ENCODE measurements at regions of chr10 and their contacts with region 1.

Region 1: DNA sequence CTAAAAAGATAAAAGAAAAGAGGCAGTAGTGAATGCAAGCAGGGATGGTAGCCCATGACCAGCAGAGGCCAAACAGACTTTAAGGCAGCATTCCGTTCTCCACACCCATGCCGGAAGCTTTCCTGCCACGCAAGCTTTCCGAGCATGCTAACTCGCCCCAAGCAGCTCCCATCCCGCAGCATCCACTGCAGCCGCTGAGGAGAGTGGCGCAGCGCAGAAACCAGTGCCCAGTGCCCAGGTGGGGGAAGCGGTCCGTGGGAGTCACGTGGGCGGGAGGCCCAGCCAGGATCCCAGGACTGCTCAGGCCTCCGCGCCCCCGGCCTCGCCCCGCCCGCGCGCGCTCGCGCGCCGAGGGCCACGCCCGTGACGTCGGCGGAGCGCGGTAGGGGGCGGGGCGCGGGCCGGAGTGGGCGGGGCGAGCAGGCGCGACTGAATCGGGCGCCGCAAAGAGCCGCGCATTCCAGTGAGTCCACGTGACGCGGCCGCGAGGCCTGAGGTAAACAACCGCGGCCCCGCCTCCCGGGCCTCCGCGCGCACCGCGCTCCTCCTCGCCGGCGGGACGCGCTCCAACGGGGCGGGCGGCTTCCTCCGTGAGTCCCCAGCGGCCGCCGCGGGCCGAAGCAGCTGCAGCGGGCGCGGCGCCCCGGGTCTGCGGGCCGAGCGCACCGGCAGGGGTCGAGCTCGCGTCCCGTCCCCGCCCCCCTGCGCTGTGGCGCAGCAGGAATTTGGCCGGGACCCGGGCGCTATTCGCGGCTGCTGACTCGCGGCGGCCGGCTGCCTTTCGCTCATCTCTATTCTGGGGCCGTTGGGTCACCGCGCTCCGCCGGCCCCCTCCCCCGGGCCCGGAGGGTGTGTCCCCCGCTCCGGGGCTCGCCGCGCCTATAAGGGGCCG is at the start of gene OTUD1:
- DNase-seq: peak; percentile 89 to 99 (median 95)
- ATAC-seq: peak; percentile 96
- H3K4me3 ChIP-seq: peak within 1 kb of the TSS; percentile 96
- H3K4me3 Mint-ChIP-seq: peak within 1 kb of the TSS; percentile 81 to 99 (median 90)
- H3K27ac ChIP-seq: peak within 1 kb of the TSS; percentile 92
- H3K27ac Mint-ChIP-seq: peak within 1 kb of the TSS; percentile 89 to 96 (median 94)
- H3K4me1 ChIP-seq: peaks cover 27 to 29% of the 10 kb centered on the region in 2 donors
- H3K4me1 Mint-ChIP-seq: peaks cover 28 to 44% (median 39%) of the 10 kb centered on the region in 7 donors
- H3K27me3 ChIP-seq: no peaks in the 10 kb centered on the region
- H3K27me3 Mint-ChIP-seq: peaks cover 0 to 8% (median 0%) of the 10 kb centered on the region in 5 donors
- total RNA-seq, gene OTUD1: 20.7 to 118 (median 44.5) TPM

Region 2: GRCh38 chr10:22003079-22003913 is 1435.5 kb before region 1 on chr10 and contains the start of gene DNAJC1:
- CTCF ChIA-PET with region 1: no interaction called
- POLR2A ChIA-PET with region 1: no interaction called
- intact Hi-C with region 1: loop called in 1 of 2 experiments (anchors 2 kb)
- DNase-seq: peak; percentile 94 to 99 (median 97)
- ATAC-seq: peak; percentile 97
- H3K4me3 ChIP-seq: peak within 1 kb of the TSS; percentile 87
- H3K4me3 Mint-ChIP-seq: peak within 1 kb of the TSS; percentile 81 to 99 (median 94)
- H3K27ac ChIP-seq: peak within 1 kb of the TSS; percentile 82
- H3K27ac Mint-ChIP-seq: peak within 1 kb of the TSS; percentile 78 to 94 (median 92)
- H3K4me1 ChIP-seq: peaks cover 18 to 19% of the 10 kb centered on the region in 2 donors
- H3K4me1 Mint-ChIP-seq: peaks cover 7 to 42% (median 29%) of the 10 kb centered on the region in 7 donors
- H3K27me3 ChIP-seq: no peaks in the 10 kb centered on the region
- H3K27me3 Mint-ChIP-seq: peaks cover 0 to 15% (median 4%) of the 10 kb centered on the region in 5 donors
- total RNA-seq, gene DNAJC1: 11.0 to 23.9 (median 12.1) TPM

Region 3: GRCh38 chr10:23035569-23035968 is 403.2 kb before region 1 on chr10:
- CTCF ChIA-PET with region 1: no interaction called
- POLR2A ChIA-PET with region 1: no interaction called
- intact Hi-C with region 1: no loop called
- DNase-seq: no peak
- ATAC-seq: no peak
- H3K4me3 ChIP-seq: no peak overlapping the region
- H3K4me3 Mint-ChIP-seq: no peak overlapping the region
- H3K27ac ChIP-seq: no peak overlapping the region
- H3K27ac Mint-ChIP-seq: no peak overlapping the region
- H3K4me1 ChIP-seq: no peaks in the 10 kb centered on the region
- H3K4me1 Mint-ChIP-seq: no peaks in the 10 kb centered on the region
- H3K27me3 ChIP-seq: no peaks in the 10 kb centered on the region
- H3K27me3 Mint-ChIP-seq: peaks cover 13 to 43% (median 42%) of the 10 kb centered on the region in 5 donors

Region 4: GRCh38 chr10:23325132-23325531 is 113.7 kb before region 1 on chr10:
- CTCF ChIA-PET with region 1: no interaction called
- POLR2A ChIA-PET with region 1: interaction called, 5 read pairs
- intact Hi-C with region 1: loop called in 1 of 2 experiments (anchors 1 kb)
- DNase-seq: no peak
- ATAC-seq: peak; percentile 24
- H3K4me3 ChIP-seq: no peak overlapping the region
- H3K4me3 Mint-ChIP-seq: no peak overlapping the region
- H3K27ac ChIP-seq: no peak overlapping the region
- H3K27ac Mint-ChIP-seq: no peak overlapping the region
- H3K4me1 ChIP-seq: no peaks in the 10 kb centered on the region
- H3K4me1 Mint-ChIP-seq: peaks cover 0 to 3% (median 0%) of the 10 kb centered on the region in 7 donors
- H3K27me3 ChIP-seq: no peaks in the 10 kb centered on the region
- H3K27me3 Mint-ChIP-seq: peaks cover 0 to 16% (median 4%) of the 10 kb centered on the region in 5 donors

Region 5: DNA sequence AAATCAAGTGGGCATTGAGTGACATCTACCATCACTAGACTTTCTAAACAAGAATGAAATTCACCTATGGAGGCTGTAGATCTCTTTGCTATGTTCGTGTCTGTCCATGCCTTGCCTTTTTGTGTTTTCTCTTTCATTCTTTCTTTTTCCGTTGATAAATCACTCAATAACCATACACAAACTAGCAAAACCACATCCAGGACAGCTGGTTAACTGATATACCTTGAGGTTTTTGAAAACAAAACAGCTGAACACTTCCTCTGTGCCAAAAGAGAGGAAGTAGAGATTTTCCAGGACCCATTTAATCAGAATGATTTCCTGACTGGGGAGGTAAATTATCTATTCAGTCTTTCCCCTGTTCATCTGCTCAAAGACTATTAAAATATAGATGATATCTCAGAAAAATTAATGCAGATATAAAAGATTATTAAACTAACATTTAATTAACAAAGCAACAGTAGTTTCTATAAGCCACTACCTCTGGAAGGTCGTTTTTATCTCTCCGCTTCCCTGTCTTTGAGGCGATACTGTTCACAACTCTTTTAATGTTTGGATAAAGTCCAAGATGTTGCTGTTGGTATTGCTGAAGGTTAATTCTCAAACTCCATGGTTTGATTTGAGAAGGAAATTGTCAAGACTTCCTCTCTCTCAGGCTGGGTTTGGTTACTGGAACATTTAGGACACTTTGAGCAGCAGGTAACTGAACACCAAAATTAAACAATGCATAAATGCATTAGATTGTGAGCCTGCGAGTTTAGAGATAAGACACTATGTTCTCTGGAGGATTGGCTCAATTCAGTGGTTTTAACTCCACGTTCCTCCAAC is 69.8 kb before region 1 on chr10:
- CTCF ChIA-PET with region 1: no interaction called
- POLR2A ChIA-PET with region 1: interaction called, 6 read pairs
- intact Hi-C with region 1: loop called (anchors 1 kb)
- DNase-seq: peak in 7 of 9 donors; percentile 33 to 73 (median 64)
- ATAC-seq: peak; percentile 70
- H3K4me3 ChIP-seq: peak overlapping the region; percentile 20
- H3K4me3 Mint-ChIP-seq: peak overlapping the region; percentile 54 to 89 (median 72)
- H3K27ac ChIP-seq: no peak overlapping the region
- H3K27ac Mint-ChIP-seq: peak overlapping the region; percentile 5 to 75 (median 51)
- H3K4me1 ChIP-seq: peaks cover 28 to 33% of the 10 kb centered on the region in 2 donors
- H3K4me1 Mint-ChIP-seq: peaks cover 33 to 63% (median 53%) of the 10 kb centered on the region in 7 donors
- H3K27me3 ChIP-seq: no peaks in the 10 kb centered on the region
- H3K27me3 Mint-ChIP-seq: no peaks in the 10 kb centered on the region

Region 6: DNA sequence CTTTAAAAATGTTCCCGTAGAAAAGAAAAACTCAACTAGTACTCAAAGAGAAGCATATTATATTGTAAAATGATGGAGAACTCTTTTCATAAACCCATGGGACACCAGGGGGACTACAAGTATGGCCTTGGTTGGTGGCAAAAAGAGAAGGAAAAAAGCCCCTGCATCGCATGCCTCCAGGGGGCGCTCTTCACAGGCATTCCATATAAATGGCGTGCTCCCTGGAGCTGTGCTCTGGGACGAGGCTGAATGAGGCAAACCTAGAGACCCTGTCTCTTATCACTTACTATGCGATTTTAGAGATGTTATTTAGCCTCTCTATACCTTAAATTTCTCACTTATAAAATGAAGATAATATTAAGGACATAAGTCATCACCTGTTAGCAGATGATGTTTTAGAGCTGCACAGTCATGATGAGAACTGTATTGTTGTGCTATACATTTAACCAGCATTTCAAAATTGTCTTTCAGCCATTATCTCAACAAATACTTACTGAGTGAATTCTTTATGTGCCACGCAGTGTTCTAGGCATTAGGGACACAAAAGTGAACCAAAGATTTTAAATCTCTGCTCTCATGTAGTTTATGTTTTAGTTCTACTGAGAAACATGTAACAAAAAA is 1179.1 kb after region 1 on chr10:
- CTCF ChIA-PET with region 1: no interaction called
- POLR2A ChIA-PET with region 1: no interaction called
- intact Hi-C with region 1: loop called in 1 of 2 experiments (anchors 10 kb)
- DNase-seq: peak; percentile 28 to 62 (median 46)
- ATAC-seq: peak; percentile 58
- H3K4me3 ChIP-seq: no peak overlapping the region
- H3K4me3 Mint-ChIP-seq: peak overlapping the region in 9 of 10 donors; percentile 34 to 75 (median 69)
- H3K27ac ChIP-seq: peak overlapping the region; percentile 5
- H3K27ac Mint-ChIP-seq: peak overlapping the region in 8 of 9 donors; percentile 65 to 97 (median 91)
- H3K4me1 ChIP-seq: peaks cover 0 to 16% of the 10 kb centered on the region in 2 donors
- H3K4me1 Mint-ChIP-seq: peaks cover 11 to 55% (median 42%) of the 10 kb centered on the region in 7 donors
- H3K27me3 ChIP-seq: no peaks in the 10 kb centered on the region
- H3K27me3 Mint-ChIP-seq: no peaks in the 10 kb centered on the region

Measured in naive thymus-derived CD4-positive, alpha-beta T cell (primary cell).